ENCODE measurements at regions of chr15 and their contacts with region 1.

Region 1: GRCh38 chr15:56732921-56733797 is at the start of gene ZNF280D:
- DNase-seq: peak; percentile 81 to 90 (median 86)
- H3K4me3 ChIP-seq: peak within 1 kb of the TSS; percentile 54 to 84 (median 73)
- H3K27ac ChIP-seq: peak within 1 kb of the TSS; percentile 85 to 100 (median 98)
- H3K27me3 ChIP-seq: no peaks in the 10 kb centered on the region
- CTCF ChIP-seq: peak in 20 of 56 donors; percentile 7 to 58 (median 27)
- total RNA-seq, gene ZNF280D: 44.4 to 121 (median 75.2) TPM

Region 2: DNA sequence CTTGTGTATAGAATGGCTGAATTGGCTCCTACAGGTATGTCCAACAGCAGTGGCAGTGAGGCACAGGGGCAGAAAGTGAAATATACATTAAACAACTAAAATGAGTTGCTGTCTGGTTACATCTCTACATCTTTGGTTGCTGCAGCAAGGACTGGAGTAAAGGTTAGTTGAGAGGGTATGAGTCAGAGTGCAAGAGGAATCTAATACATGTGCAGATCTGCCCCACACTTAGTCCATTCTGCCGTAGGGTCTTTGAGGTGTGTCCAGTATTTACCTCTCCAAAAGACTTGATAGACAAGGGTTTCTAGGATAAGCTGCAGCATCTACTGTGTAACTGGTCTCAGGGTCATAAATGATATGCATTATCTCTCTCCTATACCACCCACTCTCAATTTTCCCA is 733.5 kb before region 1 on chr15:
- intact Hi-C with region 1: loop called in 1 of 2 experiments (anchors 10 kb)
- DNase-seq: no peak
- H3K4me3 ChIP-seq: no peak overlapping the region
- H3K27ac ChIP-seq: no peak overlapping the region
- H3K27me3 ChIP-seq: no peaks in the 10 kb centered on the region
- CTCF ChIP-seq: no peak

Region 3: DNA sequence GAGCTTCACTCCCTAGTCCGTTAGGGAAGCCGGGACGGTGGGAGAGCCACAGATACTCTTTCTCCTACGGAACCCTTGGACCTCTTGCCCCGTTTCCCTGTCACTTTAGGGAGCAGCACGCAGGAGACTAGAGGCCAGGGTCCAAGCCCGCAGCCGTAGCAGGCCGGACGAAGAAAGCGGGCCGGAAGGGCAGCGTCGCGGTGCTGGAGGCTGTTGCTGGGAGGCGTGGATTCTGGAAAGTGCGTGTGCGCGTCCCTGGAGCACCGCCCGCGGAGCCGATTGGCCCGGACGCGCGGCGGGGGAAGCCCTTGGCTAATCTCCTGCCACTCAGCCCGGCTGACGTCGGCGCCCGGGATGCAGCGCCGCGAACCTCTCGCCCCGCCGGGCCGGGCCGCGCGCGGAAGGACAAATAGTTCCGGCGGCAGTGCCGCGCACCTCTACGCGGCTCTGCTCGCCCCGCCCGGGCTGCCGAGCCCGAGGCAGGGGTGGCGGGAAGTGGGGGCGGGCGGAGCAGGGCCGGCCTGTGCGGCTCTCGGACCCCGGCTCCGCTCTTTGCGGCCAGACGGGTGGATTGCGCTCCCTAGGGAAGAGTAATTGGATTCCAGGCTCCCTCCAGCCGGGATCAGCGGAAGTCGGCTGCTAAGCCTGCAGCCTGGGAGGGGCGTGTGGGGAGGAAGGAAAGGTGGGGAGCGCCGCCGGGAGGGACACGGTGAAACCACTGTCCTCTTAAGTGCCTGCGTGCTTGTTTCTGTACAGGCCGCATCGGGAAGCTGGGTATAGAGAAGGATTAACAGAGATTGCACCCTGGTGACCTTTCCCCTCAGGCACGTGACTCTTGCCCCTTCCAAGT is 154.0 kb after region 1 on chr15:
- intact Hi-C with region 1: loop called (anchors 1 kb)
- DNase-seq: peak; percentile 83 to 96 (median 92)
- H3K4me3 ChIP-seq: peak overlapping the region; percentile 57 to 94 (median 81)
- H3K27ac ChIP-seq: peak overlapping the region; percentile 86 to 100 (median 99)
- H3K27me3 ChIP-seq: no peaks in the 10 kb centered on the region
- CTCF ChIP-seq: peak in 35 of 56 donors; percentile 5 to 61 (median 34)

Region 4: DNA sequence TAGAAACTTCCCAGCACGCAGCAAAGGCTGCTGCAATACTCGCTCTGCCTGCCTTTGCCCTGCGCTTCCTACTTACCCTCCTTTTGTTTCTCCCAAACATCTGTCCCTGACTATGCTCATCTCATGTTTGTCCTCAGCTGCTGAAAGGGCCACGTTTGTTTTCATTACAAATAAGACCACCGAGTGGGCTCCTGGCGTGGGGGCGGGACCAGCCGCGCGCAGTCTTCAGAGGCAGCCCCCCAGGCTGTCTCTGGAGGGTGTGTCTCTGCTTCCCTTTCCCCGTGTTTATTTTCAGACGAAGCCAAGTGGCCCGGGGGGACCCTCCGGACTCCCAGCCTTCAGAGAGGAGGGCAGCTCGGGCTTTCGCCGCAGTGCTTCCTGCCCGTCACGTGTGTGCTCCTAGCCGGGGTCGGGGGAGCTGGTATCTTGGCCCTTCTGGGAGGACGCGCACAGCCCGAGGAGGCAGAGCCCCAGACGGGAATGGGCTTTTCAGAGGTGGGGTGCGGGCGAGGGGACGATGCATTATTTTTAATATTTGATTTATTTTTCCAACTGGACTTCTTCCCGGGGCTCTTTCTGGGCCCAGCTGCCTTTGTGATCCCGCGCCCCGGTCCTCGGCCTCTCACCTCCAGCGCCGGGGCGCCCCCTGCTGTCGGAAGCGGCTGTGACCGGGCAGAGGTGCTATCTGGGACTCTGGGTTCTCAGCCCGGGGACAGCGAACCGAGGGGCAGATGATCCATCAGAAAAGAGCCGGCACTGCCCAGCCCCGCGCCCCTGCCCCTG is 573.2 kb after region 1 on chr15:
- intact Hi-C with region 1: no loop called
- DNase-seq: peak; percentile 52 to 85 (median 75)
- H3K4me3 ChIP-seq: peak overlapping the region; percentile 36 to 86 (median 65)
- H3K27ac ChIP-seq: peak overlapping the region in 23 of 59 donors; percentile 1 to 81 (median 34)
- H3K27me3 ChIP-seq: no peaks in the 10 kb centered on the region
- CTCF ChIP-seq: peak; percentile 59 to 95 (median 88)

Measured in dorsolateral prefrontal cortex (tissue), 120 donors.